ENCODE measurements at regions of chr1 and their contacts with region 1.

Region 1: GRCh38 chr1:151198255-151199127 is at the start of gene PIP5K1A:
- DNase-seq: peak; percentile 99
- ATAC-seq: peak; percentile 72
- total RNA-seq, gene PIP5K1A: 36.2 to 49.3 TPM

Region 2: DNA sequence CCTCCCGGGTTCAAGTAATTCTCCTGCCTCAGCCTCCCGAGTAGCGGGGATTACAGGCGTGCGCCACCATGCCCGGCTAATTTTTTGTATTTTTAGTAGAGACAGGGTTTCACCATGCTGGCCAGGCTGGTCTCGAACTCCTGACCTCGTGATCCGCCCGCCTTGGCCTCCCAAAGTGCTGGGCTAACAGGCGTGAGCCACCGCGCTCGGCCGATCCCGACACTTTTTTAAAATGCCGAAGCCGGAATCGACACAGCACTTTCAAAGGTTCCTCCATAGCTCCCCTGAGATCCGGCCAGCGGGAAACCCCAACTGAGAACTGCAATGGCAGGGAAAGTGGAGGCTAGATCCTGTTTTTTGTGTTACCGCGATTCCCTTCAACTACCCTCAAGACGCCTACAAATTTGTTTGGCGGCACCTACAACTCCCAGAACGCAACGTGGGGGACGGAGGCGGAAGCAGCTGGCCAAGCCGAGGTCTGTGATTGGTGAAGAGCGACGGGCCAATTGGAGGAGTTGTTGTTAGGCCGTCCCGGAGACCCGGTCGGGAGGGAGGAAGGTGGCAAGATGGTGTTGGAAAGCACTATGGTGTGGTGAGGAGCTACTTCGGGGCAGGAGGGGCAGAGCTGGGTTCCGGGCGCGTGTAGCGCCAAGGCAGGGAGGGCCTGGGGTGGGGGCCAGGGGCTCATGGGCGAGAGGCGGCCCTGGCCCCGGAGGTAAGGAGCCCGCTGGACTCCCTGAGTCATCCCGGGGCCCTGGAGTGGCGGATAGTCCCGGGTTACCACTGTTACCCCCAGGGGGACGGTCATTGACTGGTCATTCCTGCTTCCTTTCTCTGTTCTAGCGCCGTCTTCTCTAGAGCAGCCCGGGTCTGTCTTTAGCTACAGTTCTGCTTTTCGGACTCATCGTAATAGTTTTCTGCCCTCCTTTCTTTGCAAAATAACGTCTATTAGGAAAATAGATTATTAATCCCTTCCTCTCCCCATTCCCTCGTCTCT is 56.0 kb after region 1 on chr1 and contains the start of gene PSMD4:
- intact Hi-C with region 1: loop called in 1 of 2 experiments (anchors 5 kb)
- DNase-seq: peak; percentile 93 to 96
- ATAC-seq: peak; percentile 99
- total RNA-seq, gene PSMD4: 103 to 105 TPM

Region 3: DNA sequence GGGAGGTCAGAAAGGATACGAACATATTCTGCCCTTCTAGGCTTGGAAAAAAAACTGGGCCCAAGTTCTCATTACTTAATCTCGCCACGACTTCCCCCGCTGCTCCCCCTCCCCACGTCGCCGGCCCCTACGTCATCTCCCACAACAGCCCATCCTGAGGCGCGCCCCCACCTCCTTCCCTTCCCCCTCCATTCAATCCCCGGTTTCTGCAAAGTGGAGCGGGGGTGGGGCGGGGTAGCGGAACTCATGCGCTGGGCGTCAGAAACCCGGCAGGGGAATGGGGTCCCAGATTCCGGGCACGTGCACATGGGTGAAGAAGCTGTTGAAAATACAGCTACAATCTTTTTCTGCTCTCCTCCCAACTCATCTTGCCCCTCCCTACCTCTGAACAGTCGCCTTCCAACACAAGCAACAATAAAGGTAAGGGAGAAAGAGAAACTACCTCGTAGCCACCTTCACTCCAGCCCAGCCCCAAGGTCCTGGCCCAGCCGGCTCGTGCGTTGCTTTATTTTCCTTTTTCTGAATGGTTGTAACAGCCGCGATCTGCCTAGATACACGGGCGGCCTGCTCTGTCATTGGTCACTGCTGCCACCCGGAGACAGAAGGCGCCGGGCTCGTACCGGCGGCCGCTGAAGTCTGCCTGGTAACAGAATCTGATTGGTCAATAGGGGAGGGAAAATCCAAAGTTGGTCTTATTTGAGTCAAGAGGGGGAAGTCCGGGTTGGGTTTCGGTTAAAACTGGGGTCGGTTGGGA is 148.5 kb after region 1 on chr1 and contains the start of gene RFX5:
- intact Hi-C with region 1: no loop called
- DNase-seq: peak; percentile 93 to 96
- ATAC-seq: peak; percentile 96
- total RNA-seq, gene RFX5: 20.7 to 20.9 TPM

Region 4: GRCh38 chr1:151673407-151673806 is 474.9 kb after region 1 on chr1:
- intact Hi-C with region 1: no loop called
- DNase-seq: no peak
- ATAC-seq: no peak